ENCODE measurements at regions of chr6 and their contacts with region 1.

Region 1: GRCh38 chr6:137707590-137708360 is 159.3 kb upstream of the TNFAIP3 start:
- DNase-seq: peak; percentile 32
- H3K4me3 Mint-ChIP-seq: peak overlapping the region; percentile 58
- H3K27ac Mint-ChIP-seq: no peak overlapping the region
- H3K4me1 Mint-ChIP-seq: peaks cover 21% of the 10 kb centered on the region
- H3K27me3 Mint-ChIP-seq: no peaks in the 10 kb centered on the region
- CTCF ChIP-seq: peak; percentile 49

Region 2: DNA sequence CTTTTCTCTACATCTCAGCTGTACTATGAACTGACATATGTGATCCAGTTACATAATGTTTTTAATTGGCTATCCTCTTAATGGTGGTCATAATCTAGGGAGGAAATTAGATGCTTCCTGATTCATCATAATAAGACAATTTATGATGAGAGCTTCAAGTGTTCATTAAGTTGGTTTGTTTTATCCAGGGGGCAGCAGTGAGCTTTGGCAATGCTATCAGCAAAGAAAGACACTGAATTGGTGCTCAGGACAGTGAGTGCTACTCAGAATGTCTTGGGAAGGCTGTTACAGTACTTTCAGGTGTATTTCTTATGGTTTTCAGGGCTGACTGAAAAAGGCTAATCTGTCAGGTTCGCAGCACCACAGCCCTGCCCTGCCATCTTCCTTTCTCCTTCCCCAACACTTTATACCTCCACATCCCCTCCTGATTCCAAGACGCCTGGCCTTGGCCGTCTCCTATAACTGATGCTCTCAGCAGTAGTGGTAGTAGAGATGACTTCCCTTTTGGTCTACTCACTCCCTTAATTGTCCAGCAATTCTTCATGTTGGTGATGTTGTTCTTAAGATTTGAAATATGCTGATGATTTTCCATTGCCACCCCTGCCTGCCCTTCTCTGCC is 92.3 kb after region 1 on chr6:
- CTCF ChIA-PET with region 1: no interaction called
- intact Hi-C with region 1: loop called (anchors 5 kb)
- DNase-seq: peak; percentile 41
- H3K4me3 Mint-ChIP-seq: no peak overlapping the region
- H3K27ac Mint-ChIP-seq: peak overlapping the region; percentile 81
- H3K4me1 Mint-ChIP-seq: peaks cover 14% of the 10 kb centered on the region
- H3K27me3 Mint-ChIP-seq: no peaks in the 10 kb centered on the region
- CTCF ChIP-seq: peak; percentile 18

Region 3: DNA sequence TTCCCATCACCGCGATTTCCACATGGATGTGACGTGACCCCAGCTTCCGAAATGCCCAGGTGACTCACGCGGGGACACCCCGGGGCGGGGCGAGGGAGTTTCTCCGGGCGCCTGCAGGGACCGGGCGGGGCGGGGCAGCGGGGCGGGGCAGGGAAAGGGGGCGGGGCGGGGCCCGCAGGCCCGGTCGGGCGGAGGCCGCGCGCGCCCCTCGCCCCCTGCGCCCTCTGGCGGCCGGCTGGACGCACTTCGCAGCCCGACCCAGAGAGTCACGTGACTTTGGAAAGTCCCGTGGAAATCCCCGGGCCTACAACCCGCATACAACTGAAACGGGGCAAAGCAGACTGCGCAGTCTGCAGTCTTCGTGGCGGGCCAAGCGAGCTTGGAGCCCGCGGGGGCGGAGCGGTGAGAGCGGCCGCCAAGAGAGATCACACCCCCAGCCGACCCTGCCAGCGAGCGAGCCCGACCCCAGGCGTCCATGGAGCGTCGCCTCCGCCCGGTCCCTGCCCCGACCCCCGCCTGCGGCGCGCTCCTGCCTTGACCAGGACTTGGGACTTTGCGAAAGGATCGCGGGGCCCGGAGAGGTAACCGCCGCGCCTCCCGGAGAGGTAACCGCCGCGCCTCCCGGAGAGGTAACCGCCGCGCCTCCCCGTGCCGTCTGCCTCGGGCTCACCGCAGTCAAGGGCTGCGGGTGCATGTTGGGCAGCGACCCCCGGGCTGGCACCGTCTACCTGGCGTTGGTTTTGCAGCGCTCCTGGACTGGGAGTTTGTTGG is 159.3 kb after region 1 on chr6 and contains the start of gene TNFAIP3:
- CTCF ChIA-PET with region 1: interaction called, 6 read pairs
- intact Hi-C with region 1: loop called (anchors 5 kb)
- DNase-seq: peak; percentile 89
- H3K4me3 Mint-ChIP-seq: peak within 1 kb of the TSS; percentile 86
- H3K27ac Mint-ChIP-seq: peak within 1 kb of the TSS; percentile 71
- H3K4me1 Mint-ChIP-seq: peaks cover 25% of the 10 kb centered on the region
- H3K27me3 Mint-ChIP-seq: no peaks in the 10 kb centered on the region
- CTCF ChIP-seq: peak; percentile 63
- total RNA-seq, gene TNFAIP3: 19.4 and 22.6 TPM in 2 replicates

Region 4: GRCh38 chr6:137944793-137945498 is 237.2 kb after region 1 on chr6:
- CTCF ChIA-PET with region 1: interaction called, 3 read pairs
- intact Hi-C with region 1: loop called (anchors 1 kb)
- DNase-seq: no peak
- H3K4me3 Mint-ChIP-seq: no peak overlapping the region
- H3K27ac Mint-ChIP-seq: no peak overlapping the region
- H3K4me1 Mint-ChIP-seq: no peaks in the 10 kb centered on the region
- H3K27me3 Mint-ChIP-seq: no peaks in the 10 kb centered on the region
- CTCF ChIP-seq: peak; percentile 58

Region 5: DNA sequence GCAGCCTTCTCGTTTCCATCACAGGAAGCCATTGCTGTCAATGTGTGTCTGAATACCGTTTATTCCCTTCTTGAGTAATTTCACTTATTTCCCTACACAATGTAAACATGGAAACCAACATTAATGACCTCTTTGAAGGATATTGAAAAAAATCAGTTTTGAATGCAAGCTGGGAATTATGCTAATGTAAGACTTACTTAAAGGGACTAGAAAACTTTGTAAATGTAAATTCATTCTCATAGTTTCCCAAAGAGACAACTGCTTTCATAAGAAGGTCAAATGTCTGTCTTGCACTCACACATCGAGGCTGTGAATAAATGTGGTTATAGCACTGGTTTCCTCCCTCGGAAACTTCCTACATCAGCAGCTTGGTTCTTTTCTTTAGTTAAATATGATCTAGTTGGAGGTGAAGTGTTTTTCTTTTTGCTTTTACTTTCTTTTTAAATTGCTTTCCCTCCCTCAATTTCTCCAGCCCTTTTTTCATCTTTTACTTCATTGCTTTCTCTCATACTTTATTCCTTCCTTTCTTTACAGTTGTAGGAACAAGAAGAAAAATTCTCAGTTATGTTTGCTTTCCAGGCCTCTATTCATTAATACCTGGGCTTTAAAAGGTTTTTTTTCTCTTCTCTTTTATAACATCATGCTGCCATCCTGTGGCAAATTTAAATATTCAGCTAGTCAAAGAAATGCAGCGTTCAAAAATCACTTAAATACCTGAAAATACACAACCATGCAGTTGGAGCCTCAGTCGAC is 267.6 kb after region 1 on chr6:
- CTCF ChIA-PET with region 1: no interaction called
- intact Hi-C with region 1: loop called (anchors 10 kb)
- DNase-seq: no peak
- H3K4me3 Mint-ChIP-seq: no peak overlapping the region
- H3K27ac Mint-ChIP-seq: no peak overlapping the region
- H3K4me1 Mint-ChIP-seq: peaks cover 8% of the 10 kb centered on the region
- H3K27me3 Mint-ChIP-seq: no peaks in the 10 kb centered on the region
- CTCF ChIP-seq: no peak

Region 6: GRCh38 chr6:138001750-138002349 is 294.1 kb after region 1 on chr6:
- CTCF ChIA-PET with region 1: interaction called, 4 read pairs
- intact Hi-C with region 1: loop called (anchors 10 kb)
- DNase-seq: peak; percentile 65
- H3K4me3 Mint-ChIP-seq: no peak overlapping the region
- H3K27ac Mint-ChIP-seq: no peak overlapping the region
- H3K4me1 Mint-ChIP-seq: peaks cover 4% of the 10 kb centered on the region
- H3K27me3 Mint-ChIP-seq: no peaks in the 10 kb centered on the region
- CTCF ChIP-seq: peak; percentile 62

Region 7: GRCh38 chr6:138109042-138109997 is 401.5 kb after region 1 on chr6:
- CTCF ChIA-PET with region 1: no interaction called
- intact Hi-C with region 1: loop called (anchors 5 kb)
- DNase-seq: peak; percentile 73
- H3K4me3 Mint-ChIP-seq: peak overlapping the region; percentile 51
- H3K27ac Mint-ChIP-seq: peak overlapping the region; percentile 93
- H3K4me1 Mint-ChIP-seq: peaks cover 15% of the 10 kb centered on the region
- H3K27me3 Mint-ChIP-seq: no peaks in the 10 kb centered on the region
- CTCF ChIP-seq: peak; percentile 66

Measured in Calu3 (cell line).